Aorta (tissue), 5 donors: ENCODE measurements at regions of chr2 and their contacts with region 1.

Region 1: GRCh38 chr2:239934571-239935171 is 90.5 kb downstream of the NDUFA10 start:
- DNase-seq: peak; percentile 80 to 84
- ATAC-seq: peak; percentile 83
- H3K4me3 ChIP-seq: no peak overlapping the region
- H3K27ac ChIP-seq: no peak overlapping the region
- H3K4me1 ChIP-seq: no peaks in the 10 kb centered on the region
- H3K27me3 ChIP-seq: no peaks in the 10 kb centered on the region

Region 2: DNA sequence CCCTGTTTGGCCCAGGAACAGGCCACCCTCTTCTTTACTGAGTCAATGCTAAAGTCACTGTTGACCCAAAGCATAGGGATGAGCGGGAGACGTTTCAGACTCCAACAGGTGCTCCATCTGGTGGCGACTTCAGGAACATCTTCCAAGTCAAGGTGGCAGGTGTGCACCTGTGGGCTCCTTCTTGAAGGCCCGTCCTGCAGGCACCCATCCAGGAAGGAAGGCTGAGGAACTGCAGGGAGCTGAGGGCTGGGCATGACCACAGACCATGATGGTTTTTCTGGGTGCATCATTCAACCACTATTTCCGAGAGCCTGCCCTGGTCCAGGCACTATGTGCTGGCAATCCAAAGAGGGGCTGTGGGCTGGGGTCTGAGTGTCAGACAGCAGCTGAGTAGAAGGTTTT is 52.3 kb before region 1 on chr2:
- intact Hi-C with region 1: no loop called
- DNase-seq: no peak
- ATAC-seq: peak; percentile 83
- H3K4me3 ChIP-seq: no peak overlapping the region
- H3K27ac ChIP-seq: no peak overlapping the region
- H3K4me1 ChIP-seq: no peaks in the 10 kb centered on the region
- H3K27me3 ChIP-seq: no peaks in the 10 kb centered on the region

Region 3: GRCh38 chr2:239953418-239954061 is 18.9 kb after region 1 on chr2:
- intact Hi-C with region 1: loop called in 1 of 2 experiments (anchors 2 kb)
- DNase-seq: peak; percentile 71 to 86
- ATAC-seq: peak; percentile 83
- H3K4me3 ChIP-seq: no peak overlapping the region
- H3K27ac ChIP-seq: peak overlapping the region; percentile 58 to 61
- H3K4me1 ChIP-seq: peaks cover 0 to 1% of the 10 kb centered on the region in 2 donors
- H3K27me3 ChIP-seq: no peaks in the 10 kb centered on the region